ENCODE measurements at regions of chr2 and their contacts with region 1.

Region 1: DNA sequence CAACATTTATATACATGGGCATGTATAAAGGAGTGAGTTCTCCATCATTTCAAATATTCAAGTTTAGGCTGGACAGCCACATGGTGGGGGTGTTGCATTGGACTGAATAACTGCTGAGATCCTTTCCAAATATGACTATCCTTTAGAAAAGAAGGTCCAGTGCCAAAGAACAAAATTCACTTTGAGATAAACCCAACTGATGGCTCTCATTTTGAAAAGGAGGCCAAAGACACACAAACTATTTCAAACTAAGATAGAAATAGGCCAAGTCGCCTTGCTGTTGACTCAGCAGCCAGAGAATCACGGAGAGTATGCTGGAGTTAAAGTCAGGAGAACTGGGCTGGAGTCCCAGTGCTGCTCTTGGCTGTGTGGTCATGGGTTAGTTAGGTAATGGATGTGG is 204.5 kb upstream of the LRATD1 start:
- DNase-seq: peak; percentile 60
- ATAC-seq: peak; percentile 81
- H3K4me3 ChIP-seq: no peak overlapping the region
- H3K27ac ChIP-seq: no peak overlapping the region
- H3K4me1 ChIP-seq: peaks cover 5% of the 10 kb centered on the region; the same call in 1 of the 2 replicates
- H3K27me3 ChIP-seq: no peaks in the 10 kb centered on the region
- CTCF ChIP-seq: peak; percentile 69

Region 2: DNA sequence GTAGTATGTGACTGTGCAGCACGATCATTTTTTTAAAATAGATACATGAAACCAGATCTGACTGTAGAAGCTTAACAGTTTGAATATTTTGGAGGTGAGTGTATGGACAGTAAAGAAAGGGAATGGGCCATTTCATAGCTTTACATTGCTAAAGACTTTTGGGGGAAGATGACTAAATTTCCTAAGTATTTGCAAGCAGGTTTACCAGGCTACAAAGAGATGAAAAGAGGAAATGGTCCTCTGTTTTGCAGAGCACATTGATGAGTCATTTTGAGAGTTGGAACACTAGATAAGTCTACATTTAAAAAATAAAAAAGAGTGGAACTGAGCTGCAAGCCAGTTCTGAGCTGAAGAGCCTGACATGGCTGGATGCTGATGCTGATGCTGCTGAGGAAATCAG is 88.8 kb after region 1 on chr2:
- CTCF ChIA-PET with region 1: no interaction called
- POLR2A ChIA-PET with region 1: no interaction called
- intact Hi-C with region 1: loop called (anchors 2 kb)
- DNase-seq: peak; percentile 97
- ATAC-seq: peak; percentile 84
- H3K4me3 ChIP-seq: no peak overlapping the region
- H3K27ac ChIP-seq: peak overlapping the region; percentile 94
- H3K4me1 ChIP-seq: peaks cover 46% of the 10 kb centered on the region
- H3K27me3 ChIP-seq: no peaks in the 10 kb centered on the region
- CTCF ChIP-seq: no peak

Region 3: DNA sequence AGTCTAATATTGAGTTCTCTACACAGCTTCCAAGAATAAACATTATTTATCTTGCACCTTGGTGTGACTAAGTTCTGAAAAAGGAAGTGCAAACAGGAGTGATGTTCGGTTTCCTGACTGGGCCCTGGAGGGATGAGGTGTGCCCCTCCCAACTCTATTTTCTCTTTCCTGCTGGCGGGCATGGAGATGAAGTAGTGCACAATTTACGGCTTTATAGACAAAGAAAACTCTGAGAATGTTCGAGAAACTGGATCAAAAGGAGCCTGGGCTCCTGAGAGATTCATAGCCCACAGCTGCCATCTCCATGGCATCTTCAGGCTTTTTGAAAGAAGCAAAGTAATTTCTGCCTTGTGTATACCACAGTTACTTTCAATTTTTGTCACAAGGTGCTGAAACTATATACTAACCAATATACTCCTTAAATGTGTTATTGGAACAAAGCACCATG is 226.8 kb after region 1 on chr2:
- CTCF ChIA-PET with region 1: no interaction called
- POLR2A ChIA-PET with region 1: no interaction called
- intact Hi-C with region 1: loop called (anchors 1 kb)
- DNase-seq: peak; percentile 22
- ATAC-seq: peak; percentile 90
- H3K4me3 ChIP-seq: no peak overlapping the region
- H3K27ac ChIP-seq: no peak overlapping the region
- H3K4me1 ChIP-seq: peaks cover 6% of the 10 kb centered on the region; the same call in 1 of the 2 replicates
- H3K27me3 ChIP-seq: no peaks in the 10 kb centered on the region
- CTCF ChIP-seq: no peak

Region 4: DNA sequence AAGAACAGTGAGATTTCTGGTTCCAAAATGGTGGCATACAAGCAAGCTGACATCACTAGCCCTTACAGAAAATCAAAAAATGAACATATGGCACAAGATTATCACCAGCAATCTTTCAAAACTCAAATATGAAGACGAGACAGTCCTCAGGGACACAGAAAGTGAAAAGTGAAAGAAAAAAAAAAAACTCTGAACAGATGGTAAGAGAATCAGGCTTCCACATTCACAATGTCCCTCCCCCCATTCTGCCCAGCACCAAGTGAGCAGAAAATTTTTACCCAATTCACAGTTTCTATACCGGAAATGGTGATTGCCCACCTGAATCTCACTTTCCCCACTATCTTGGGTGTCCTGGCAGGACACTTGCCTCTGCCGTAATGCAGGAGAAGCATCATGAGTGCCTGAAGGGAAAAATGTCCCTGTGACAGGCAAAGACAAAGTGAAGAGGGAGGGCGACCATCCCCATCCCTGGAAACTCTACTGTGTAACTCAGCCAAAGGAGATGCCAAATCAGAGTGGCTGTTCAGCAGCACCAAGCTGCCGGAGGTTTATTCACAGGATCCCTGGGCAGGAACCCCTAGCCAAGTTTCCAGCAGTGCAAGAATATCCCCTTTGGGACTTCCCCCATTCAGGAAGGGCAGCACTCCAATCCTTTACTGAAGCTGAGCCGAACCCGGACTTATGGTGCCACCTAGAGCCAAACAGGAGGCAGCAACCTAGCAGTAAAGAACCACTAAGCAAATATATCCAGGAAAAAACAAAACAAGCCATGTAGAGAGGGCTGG is 516.7 kb after region 1 on chr2:
- CTCF ChIA-PET with region 1: no interaction called
- POLR2A ChIA-PET with region 1: no interaction called
- intact Hi-C with region 1: loop called (anchors 1 kb)
- DNase-seq: peak; percentile 64
- ATAC-seq: peak; percentile 81
- H3K4me3 ChIP-seq: no peak overlapping the region
- H3K27ac ChIP-seq: no peak overlapping the region
- H3K4me1 ChIP-seq: no peaks in the 10 kb centered on the region
- H3K27me3 ChIP-seq: no peaks in the 10 kb centered on the region
- CTCF ChIP-seq: peak; percentile 86

Region 5: DNA sequence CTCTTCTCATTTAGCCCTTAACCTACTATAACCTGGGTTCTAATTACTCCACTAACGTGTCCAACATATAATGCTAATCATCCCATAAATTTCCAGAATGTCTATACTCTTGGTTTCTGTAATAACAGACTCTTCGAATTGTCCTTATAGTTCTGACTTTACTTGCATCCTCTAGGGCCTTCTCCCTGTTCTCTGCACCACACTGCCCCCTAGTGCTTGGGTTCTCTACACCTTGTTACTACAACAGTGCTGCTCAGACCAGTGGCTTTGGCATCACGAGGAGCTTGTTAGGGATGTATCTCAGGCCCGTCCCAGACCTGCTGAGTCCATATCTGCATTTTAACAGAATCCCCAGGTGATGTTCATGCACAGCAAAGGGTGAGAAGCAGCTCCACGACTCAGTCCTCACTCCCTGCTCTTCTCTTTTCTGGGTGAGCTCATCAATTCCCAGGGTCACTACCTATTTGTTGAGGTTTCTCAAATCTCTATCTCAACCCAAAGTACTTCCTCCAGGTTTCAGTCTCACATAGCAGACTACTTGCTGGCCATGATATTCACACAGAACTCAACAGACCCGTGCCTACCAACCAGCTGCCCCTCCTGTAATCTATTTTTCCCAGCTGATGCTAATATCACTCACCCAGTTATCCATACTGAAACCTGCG is 1149.1 kb after region 1 on chr2:
- CTCF ChIA-PET with region 1: no interaction called
- POLR2A ChIA-PET with region 1: no interaction called
- intact Hi-C with region 1: loop called (anchors 5 kb)
- DNase-seq: peak; percentile 89
- ATAC-seq: peak; percentile 97
- H3K4me3 ChIP-seq: no peak overlapping the region
- H3K27ac ChIP-seq: no peak overlapping the region
- H3K4me1 ChIP-seq: peaks cover 6% of the 10 kb centered on the region; the same call in 1 of the 2 replicates
- H3K27me3 ChIP-seq: no peaks in the 10 kb centered on the region
- CTCF ChIP-seq: peak; percentile 92

Measured in PC-3 (cell line).